BJ (cell line): ENCODE measurements at regions of chr1 and their contacts with region 1.

Region 1: GRCh38 chr1:224789311-224789710 is 140.2 kb upstream of the DNAH14 start:
- DNase-seq: no peak
- H3K4me3 ChIP-seq: no peak overlapping the region
- H3K27me3 ChIP-seq: no peaks in the 10 kb centered on the region
- CTCF ChIP-seq: no peak

Region 2: GRCh38 chr1:224774378-224774777 is 14.9 kb before region 1 on chr1:
- CTCF ChIA-PET with region 1: no interaction called
- POLR2A ChIA-PET with region 1: interaction called, 10 read pairs
- DNase-seq: no peak
- H3K4me3 ChIP-seq: no peak overlapping the region
- H3K27me3 ChIP-seq: peaks cover 2% of the 10 kb centered on the region; the same call in 1 of the 2 replicates
- CTCF ChIP-seq: 0 out of 2 replicates have a peak, but pooled peaks have one; percentile 12